ENCODE measurements at regions of chr10 and their contacts with region 1.

Region 1: DNA sequence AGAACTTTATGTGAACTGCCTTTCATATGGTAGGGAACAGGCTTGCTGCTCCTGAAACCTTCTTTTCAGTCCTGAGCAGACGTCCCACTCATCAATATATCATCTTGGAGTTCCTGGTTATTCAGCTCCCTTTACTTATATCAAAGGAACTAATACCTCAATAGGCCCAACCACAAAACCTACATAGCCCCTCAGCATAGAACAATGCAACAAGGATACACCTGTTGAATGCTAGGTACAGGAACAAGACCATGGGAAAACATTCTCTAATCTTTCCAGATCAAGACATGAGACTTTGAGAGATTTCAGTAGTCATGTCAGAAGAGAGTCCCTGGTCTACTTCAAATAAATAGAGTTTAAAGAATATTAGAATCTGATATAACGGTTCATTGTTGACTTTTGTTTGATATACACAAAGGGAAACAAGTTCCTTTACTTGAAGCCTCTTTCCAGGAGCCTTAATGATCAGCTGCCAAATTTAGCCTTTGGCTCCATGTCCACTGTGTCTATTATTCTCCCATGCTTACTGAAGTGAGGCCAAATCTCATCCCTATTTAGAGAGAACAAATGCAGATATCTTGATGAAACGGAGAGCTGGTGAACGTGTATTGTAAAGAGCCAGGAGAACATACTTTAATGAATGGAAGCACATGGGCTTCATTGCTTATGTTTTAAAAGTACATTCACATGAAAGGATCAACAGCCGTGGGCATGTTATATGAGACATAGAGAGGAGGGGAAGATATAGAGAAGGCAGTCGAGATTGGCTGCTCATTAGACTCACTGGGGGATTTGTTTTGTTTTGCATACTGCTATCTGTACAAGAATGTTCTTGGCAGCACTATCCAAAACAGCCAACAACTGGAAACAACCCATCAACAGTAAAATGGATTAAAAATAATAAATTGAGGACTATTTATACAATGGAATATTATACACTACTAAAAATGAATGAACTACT is 9.5 kb downstream of the RHOBTB1 start:
- DNase-seq: peak in 1 of 2 donors; percentile 45
- ATAC-seq: peak in 7 of 8 donors; percentile 48 to 89 (median 78)
- H3K4me3 ChIP-seq: no peak overlapping the region
- H3K27ac ChIP-seq: peak overlapping the region in 6 of 10 donors; percentile 6 to 72 (median 62)
- H3K4me1 ChIP-seq: peaks cover 0 to 51% (median 25%) of the 10 kb centered on the region in 9 donors
- H3K27me3 ChIP-seq: no peaks in the 10 kb centered on the region
- CTCF ChIP-seq: no peak

Region 2: GRCh38 chr10:59470570-59470969 is 1463.9 kb before region 1 on chr10:
- intact Hi-C with region 1: no loop called
- DNase-seq: no peak
- ATAC-seq: no peak
- H3K4me3 ChIP-seq: no peak overlapping the region
- H3K27ac ChIP-seq: no peak overlapping the region
- H3K4me1 ChIP-seq: no peaks in the 10 kb centered on the region
- H3K27me3 ChIP-seq: no peaks in the 10 kb centered on the region
- CTCF ChIP-seq: no peak

Region 3: GRCh38 chr10:59493017-59493416 is 1441.5 kb before region 1 on chr10:
- intact Hi-C with region 1: loop called in 1 of 10 experiments (anchors 5 kb)
- DNase-seq: no peak
- ATAC-seq: no peak
- H3K4me3 ChIP-seq: no peak overlapping the region
- H3K27ac ChIP-seq: no peak overlapping the region
- H3K4me1 ChIP-seq: no peaks in the 10 kb centered on the region
- H3K27me3 ChIP-seq: no peaks in the 10 kb centered on the region
- CTCF ChIP-seq: no peak

Region 4: DNA sequence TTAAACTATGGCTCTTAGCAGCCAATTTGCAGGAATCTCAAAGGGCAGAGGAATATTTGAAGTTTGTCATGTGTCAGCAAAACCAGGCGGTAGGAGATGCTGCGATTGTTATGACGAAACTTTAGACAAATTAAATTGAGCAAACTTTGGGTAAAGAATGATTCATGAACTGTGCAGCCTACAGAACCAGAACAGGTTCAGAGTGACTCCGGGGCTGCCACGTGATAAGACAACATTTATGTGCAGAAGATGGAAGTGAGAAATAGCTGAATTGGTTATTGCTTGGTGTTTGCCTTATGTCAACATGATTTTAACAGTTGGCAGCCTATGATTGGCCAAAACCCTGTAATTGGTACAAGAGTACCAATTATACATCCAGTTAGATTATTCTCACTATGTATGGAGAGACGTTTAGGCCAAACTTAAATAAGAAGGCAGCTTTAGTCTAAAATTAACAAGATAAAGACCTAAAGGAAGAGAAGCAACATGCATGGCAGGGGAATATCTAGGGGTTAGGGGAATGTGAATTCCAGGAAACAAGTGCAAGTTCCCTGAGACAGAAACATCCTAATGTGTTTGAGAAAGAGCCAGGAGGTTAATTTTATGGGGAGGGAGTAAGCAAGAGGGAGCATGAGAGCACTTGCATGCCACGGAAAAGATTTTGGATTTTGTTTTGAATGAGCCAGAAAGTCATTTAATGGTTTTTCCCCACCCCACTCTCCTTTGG is 988.7 kb before region 1 on chr10:
- intact Hi-C with region 1: no loop called
- DNase-seq: no peak
- ATAC-seq: no peak
- H3K4me3 ChIP-seq: no peak overlapping the region
- H3K27ac ChIP-seq: no peak overlapping the region
- H3K4me1 ChIP-seq: no peaks in the 10 kb centered on the region
- H3K27me3 ChIP-seq: no peaks in the 10 kb centered on the region
- CTCF ChIP-seq: no peak